GM12878 (cell line): ENCODE measurements at regions of chr1 and their contacts with region 1.

Region 1: DNA sequence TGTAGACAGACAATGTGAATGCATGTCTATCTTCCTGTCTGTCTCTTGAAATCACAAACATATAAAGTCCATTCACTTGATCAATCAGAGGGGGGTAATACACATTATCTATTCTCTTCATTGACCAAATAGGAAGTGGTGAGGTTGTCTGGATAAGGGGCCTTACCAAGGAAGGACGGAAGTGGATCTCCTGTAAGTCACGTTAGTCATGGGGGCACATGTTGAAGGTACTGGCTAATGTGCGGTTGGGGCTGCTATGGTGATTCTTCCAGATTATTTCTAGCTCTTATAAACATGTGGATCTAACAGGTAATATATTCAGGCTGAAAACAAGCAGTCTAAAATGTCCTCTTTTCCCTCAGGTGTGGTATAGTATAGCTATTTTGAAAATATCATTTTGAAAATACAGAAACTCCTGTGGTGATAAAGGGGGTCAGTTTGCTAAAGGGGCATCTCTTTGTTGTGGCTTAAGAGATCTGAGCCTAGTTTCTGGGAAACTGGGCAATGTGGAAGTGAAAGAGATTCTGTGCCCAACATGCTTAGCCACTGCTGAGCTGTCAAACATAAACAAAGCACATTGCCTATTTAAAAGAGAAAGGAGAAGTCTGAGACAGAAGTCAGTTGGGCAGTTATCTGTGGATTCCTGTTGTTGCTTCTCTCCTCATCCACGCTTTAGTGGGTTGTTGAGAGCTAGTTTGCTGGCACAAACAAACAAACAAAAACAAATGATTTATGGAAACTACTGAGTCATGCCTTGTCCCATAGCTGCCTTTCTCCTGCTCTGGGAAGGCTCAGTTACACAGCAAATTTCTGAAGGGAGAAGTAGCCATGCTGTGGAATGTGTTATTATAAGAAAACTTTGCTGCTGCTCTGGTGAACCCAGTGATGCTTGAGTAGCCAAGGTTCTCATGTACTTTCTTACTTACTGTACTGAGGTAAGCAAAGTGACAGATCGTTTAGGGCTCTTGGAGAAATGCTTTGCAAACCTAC is 166.9 kb downstream of the HLX start:
- DNase-seq: peak; percentile 92
- ATAC-seq: peak; percentile 94
- H3K4me3 ChIP-seq: 0 out of 2 replicates have a peak overlapping the region, but pooled peaks have one; percentile 9
- H3K27ac ChIP-seq: peak overlapping the region; percentile 77
- H3K4me1 ChIP-seq: peaks cover 24% of the 10 kb centered on the region
- H3K27me3 ChIP-seq: no peaks in the 10 kb centered on the region
- CTCF ChIP-seq: no peak
- EP300 ChIP-seq: peak; percentile 87 to 90
- POLR2A ChIP-seq: no peak
- RAD21 ChIP-seq: no peak

Region 2: GRCh38 chr1:220879076-220879508 is 167.0 kb before region 1 on chr1 and contains the start of gene HLX:
- CTCF ChIA-PET with region 1: interaction called, 4 read pairs
- POLR2A ChIA-PET with region 1: no interaction called
- RAD21 ChIA-PET with region 1: interaction called, 5 read pairs
- SMC1A ChIA-PET with region 1: interaction called, 4 read pairs
- in situ Hi-C with region 1: no loop called
- intact Hi-C with region 1: loop called (anchors 2 kb)
- DNase-seq: no peak
- ATAC-seq: peak; percentile 82
- H3K4me3 ChIP-seq: peak within 1 kb of the TSS; percentile 68
- H3K27ac ChIP-seq: no peak within 1 kb of the TSS
- H3K4me1 ChIP-seq: peaks cover 15% of the 10 kb centered on the region
- H3K27me3 ChIP-seq: peaks cover 0 to 17% of the 10 kb centered on the region in 2 experiments; a peak in 3 of 4 replicates
- CTCF ChIP-seq: no peak
- EP300 ChIP-seq: no peak
- POLR2A ChIP-seq: no peak
- RAD21 ChIP-seq: no peak
- polyA plus RNA-seq, gene HLX: 0.11 to 0.22 TPM

Region 3: GRCh38 chr1:221025956-221026355 is 20.2 kb before region 1 on chr1:
- CTCF ChIA-PET with region 1: no interaction called
- POLR2A ChIA-PET with region 1: no interaction called
- RAD21 ChIA-PET with region 1: no interaction called
- SMC1A ChIA-PET with region 1: interaction called, 14 read pairs
- in situ Hi-C with region 1: no loop called
- intact Hi-C with region 1: no loop called
- DNase-seq: no peak
- ATAC-seq: peak; percentile 60
- H3K4me3 ChIP-seq: no peak overlapping the region
- H3K27ac ChIP-seq: no peak overlapping the region
- H3K4me1 ChIP-seq: no peaks in the 10 kb centered on the region
- H3K27me3 ChIP-seq: no peaks in the 10 kb centered on the region
- CTCF ChIP-seq: no peak
- EP300 ChIP-seq: no peak
- POLR2A ChIP-seq: no peak
- RAD21 ChIP-seq: no peak

Region 4: DNA sequence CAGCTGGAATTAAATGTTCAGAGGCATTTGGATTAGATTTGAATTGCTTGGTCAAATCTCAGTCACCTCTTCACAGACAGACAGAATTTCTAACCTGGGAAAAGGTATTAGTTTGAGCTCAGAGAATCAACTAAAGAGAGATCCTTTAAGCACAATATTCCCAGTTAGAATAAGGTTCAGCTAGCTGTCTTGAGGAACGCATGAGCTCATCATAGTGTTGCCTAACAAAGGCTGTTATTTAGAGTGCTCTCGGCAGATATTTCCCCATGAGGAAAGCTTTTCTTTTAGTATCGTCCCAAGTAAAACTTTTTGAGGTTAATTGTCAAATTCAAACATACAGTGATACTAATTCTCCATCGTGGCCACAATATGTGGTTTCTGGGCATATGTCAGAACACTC is 103.0 kb after region 1 on chr1:
- CTCF ChIA-PET with region 1: no interaction called
- POLR2A ChIA-PET with region 1: no interaction called
- RAD21 ChIA-PET with region 1: no interaction called
- SMC1A ChIA-PET with region 1: interaction called, 10 read pairs
- in situ Hi-C with region 1: no loop called
- intact Hi-C with region 1: no loop called
- DNase-seq: no peak
- ATAC-seq: no peak
- H3K4me3 ChIP-seq: no peak overlapping the region
- H3K27ac ChIP-seq: no peak overlapping the region
- H3K4me1 ChIP-seq: no peaks in the 10 kb centered on the region
- H3K27me3 ChIP-seq: no peaks in the 10 kb centered on the region; a peak in 1 of 4 replicates
- CTCF ChIP-seq: no peak
- EP300 ChIP-seq: no peak
- POLR2A ChIP-seq: no peak
- RAD21 ChIP-seq: no peak

Region 5: GRCh38 chr1:221157026-221157761 is 111.1 kb after region 1 on chr1:
- CTCF ChIA-PET with region 1: interaction called, 3 read pairs
- POLR2A ChIA-PET with region 1: no interaction called
- RAD21 ChIA-PET with region 1: no interaction called
- SMC1A ChIA-PET with region 1: interaction called, 6 read pairs
- in situ Hi-C with region 1: no loop called
- intact Hi-C with region 1: loop called (anchors 1 kb)
- DNase-seq: peak; percentile 41
- ATAC-seq: peak; percentile 98
- H3K4me3 ChIP-seq: no peak overlapping the region
- H3K27ac ChIP-seq: no peak overlapping the region
- H3K4me1 ChIP-seq: no peaks in the 10 kb centered on the region; the same call in 1 of the 2 replicates
- H3K27me3 ChIP-seq: no peaks in the 10 kb centered on the region
- CTCF ChIP-seq: no peak
- EP300 ChIP-seq: peak; percentile 97
- POLR2A ChIP-seq: no peak
- RAD21 ChIP-seq: no peak

Region 6: GRCh38 chr1:221166559-221167318 is 120.6 kb after region 1 on chr1:
- CTCF ChIA-PET with region 1: interaction called, 3 read pairs
- POLR2A ChIA-PET with region 1: interaction called, 3 read pairs
- RAD21 ChIA-PET with region 1: interaction called, 22 read pairs
- SMC1A ChIA-PET with region 1: interaction called, 35 read pairs
- in situ Hi-C with region 1: no loop called
- intact Hi-C with region 1: no loop called
- DNase-seq: peak; percentile 53
- ATAC-seq: peak; percentile 92
- H3K4me3 ChIP-seq: no peak overlapping the region
- H3K27ac ChIP-seq: 0 out of 2 replicates have a peak overlapping the region, but pooled peaks have one; percentile 8
- H3K4me1 ChIP-seq: peaks cover 15% of the 10 kb centered on the region
- H3K27me3 ChIP-seq: 0 out of 4 replicates have a peak, but pooled peaks cover 0 to 2% of the 10 kb centered on the region in 2 experiments
- CTCF ChIP-seq: no peak
- EP300 ChIP-seq: peak; percentile 63 to 75; a peak in 3 of 4 replicates
- POLR2A ChIP-seq: no peak
- RAD21 ChIP-seq: no peak